CD14-positive monocyte (primary cell): ENCODE measurements at regions of chr17 and their contacts with region 1.

Region 1: DNA sequence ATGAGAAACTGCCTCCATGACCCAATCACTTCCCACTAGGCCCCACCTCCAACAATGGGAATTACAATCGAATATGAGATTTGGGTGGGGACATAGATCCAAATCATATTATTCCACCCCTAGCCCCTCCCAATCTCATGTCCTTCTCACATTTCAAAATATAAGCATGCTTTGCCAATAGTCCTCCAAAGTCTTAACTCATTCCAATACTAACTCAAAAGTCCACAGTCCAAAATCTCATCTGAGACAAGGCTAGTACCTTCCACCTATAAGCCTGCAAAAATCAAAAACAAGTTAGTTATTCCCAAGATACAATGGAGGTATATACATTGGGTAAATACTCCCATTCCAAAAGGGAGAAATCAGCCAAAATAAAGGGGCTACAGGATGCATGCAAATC is 12.9 kb downstream of the CLEC10A start:
- DNase-seq: no peak
- H3K4me3 ChIP-seq: no peak overlapping the region
- H3K4me3 Mint-ChIP-seq: no peak overlapping the region
- H3K27ac ChIP-seq: no peak overlapping the region
- H3K27ac Mint-ChIP-seq: no peak overlapping the region
- H3K4me1 ChIP-seq: peaks cover 7 to 20% of the 10 kb centered on the region in 2 donors
- H3K4me1 Mint-ChIP-seq: peaks cover 20% of the 10 kb centered on the region
- H3K27me3 ChIP-seq: no peaks in the 10 kb centered on the region
- H3K27me3 Mint-ChIP-seq: peaks cover 6 to 17% (median 12%) of the 10 kb centered on the region in 3 donors
- CTCF ChIP-seq: no peak

Region 2: GRCh38 chr17:6995431-6996255 is 71.6 kb before region 1 on chr17 and contains the start of gene ALOX12:
- intact Hi-C with region 1: no loop called
- DNase-seq: no peak
- H3K4me3 ChIP-seq: peak within 1 kb of the TSS in 1 of 3 experiments; percentile 32
- H3K4me3 Mint-ChIP-seq: peak within 1 kb of the TSS; percentile 34 to 55
- H3K27ac ChIP-seq: no peak within 1 kb of the TSS
- H3K27ac Mint-ChIP-seq: peak within 1 kb of the TSS in 1 of 7 donors; percentile 63
- H3K4me1 ChIP-seq: peaks cover 0 to 15% of the 10 kb centered on the region in 2 donors
- H3K4me1 Mint-ChIP-seq: peaks cover 17% of the 10 kb centered on the region
- H3K27me3 ChIP-seq: no peaks in the 10 kb centered on the region
- H3K27me3 Mint-ChIP-seq: peaks cover 4 to 11% (median 5%) of the 10 kb centered on the region in 3 donors
- CTCF ChIP-seq: no peak
- polyA plus RNA-seq, gene ALOX12: 0.29 to 1.2 TPM in 2 of 3 donors, not detected in the other

Region 3: GRCh38 chr17:7167832-7168231 is 100.6 kb after region 1 on chr17:
- intact Hi-C with region 1: no loop called
- DNase-seq: peak; percentile 89 to 97 (median 95)
- H3K4me3 ChIP-seq: peak overlapping the region in 2 of 3 experiments; percentile 11 to 88
- H3K4me3 Mint-ChIP-seq: peak overlapping the region; percentile 49 to 82
- H3K27ac ChIP-seq: peak overlapping the region; percentile 77 to 82
- H3K27ac Mint-ChIP-seq: peak overlapping the region; percentile 83 to 96 (median 94)
- H3K4me1 ChIP-seq: peaks cover 75 to 86% of the 10 kb centered on the region in 2 donors
- H3K4me1 Mint-ChIP-seq: peaks cover 61% of the 10 kb centered on the region
- H3K27me3 ChIP-seq: no peaks in the 10 kb centered on the region
- H3K27me3 Mint-ChIP-seq: peaks cover 0 to 5% (median 0%) of the 10 kb centered on the region in 3 donors
- CTCF ChIP-seq: no peak

Region 4: GRCh38 chr17:7767405-7768021 is 700.3 kb after region 1 on chr17:
- intact Hi-C with region 1: loop called in 1 of 2 experiments (anchors 5 kb)
- DNase-seq: no peak
- H3K4me3 ChIP-seq: no peak overlapping the region
- H3K4me3 Mint-ChIP-seq: no peak overlapping the region
- H3K27ac ChIP-seq: no peak overlapping the region
- H3K27ac Mint-ChIP-seq: no peak overlapping the region
- H3K4me1 ChIP-seq: no peaks in the 10 kb centered on the region
- H3K4me1 Mint-ChIP-seq: no peaks in the 10 kb centered on the region
- H3K27me3 ChIP-seq: no peaks in the 10 kb centered on the region
- H3K27me3 Mint-ChIP-seq: peaks cover 2 to 6% (median 4%) of the 10 kb centered on the region in 3 donors
- CTCF ChIP-seq: no peak